CD4-positive, alpha-beta memory T cell (primary cell): ENCODE measurements at regions of chr5 and their contacts with region 1.

Region 1: DNA sequence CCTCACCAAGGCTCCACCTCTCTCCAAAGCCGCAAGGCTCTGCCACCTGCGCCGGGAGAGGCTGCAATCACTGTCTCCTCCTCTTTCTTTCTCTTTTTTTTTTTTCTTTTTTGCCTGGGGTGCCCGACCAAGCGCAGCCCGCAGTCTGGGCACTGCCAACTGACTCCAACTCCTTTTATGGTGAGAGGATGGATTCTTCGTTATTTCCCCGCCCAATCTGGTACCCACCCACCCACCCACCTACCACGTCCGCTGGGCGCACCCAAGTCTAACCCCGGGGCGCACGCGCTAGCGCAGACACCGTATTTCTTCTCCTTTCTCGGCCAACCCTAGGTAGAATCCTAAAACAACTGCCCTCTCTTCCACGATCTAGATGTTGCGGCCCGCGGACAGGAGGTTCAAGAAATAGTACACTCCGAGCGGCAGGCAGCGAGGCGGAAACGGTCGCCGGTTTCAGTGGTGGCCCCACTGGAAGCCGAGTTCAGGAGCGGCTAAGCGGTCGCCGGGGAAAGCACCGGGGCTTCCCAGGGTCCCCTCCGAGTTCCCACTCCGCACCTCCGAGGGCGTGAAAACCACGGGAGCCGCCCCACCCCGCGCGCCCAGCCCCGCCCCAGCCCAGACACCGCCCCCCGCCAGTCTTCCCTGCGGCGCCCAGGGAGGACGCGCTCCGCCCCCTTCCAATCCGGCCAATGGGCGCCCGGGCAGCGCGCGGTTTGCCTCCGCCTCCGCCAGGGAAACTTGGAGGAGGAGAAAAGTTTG is 381 bp upstream of the PTGER4 start:
- DNase-seq: peak; percentile 90 to 92 (median 90)
- H3K4me3 ChIP-seq: peak overlapping the region; percentile 74 to 92
- H3K4me3 Mint-ChIP-seq: peak overlapping the region; percentile 92 to 100 (median 99)
- H3K27ac ChIP-seq: peak overlapping the region; percentile 86
- H3K27ac Mint-ChIP-seq: peak overlapping the region; percentile 87 to 99 (median 98)
- H3K4me1 ChIP-seq: peaks cover 46% of the 10 kb centered on the region
- H3K4me1 Mint-ChIP-seq: peaks cover 34 to 70% (median 46%) of the 10 kb centered on the region in 4 donors
- H3K27me3 ChIP-seq: no peaks in the 10 kb centered on the region
- H3K27me3 Mint-ChIP-seq: no peaks in the 10 kb centered on the region

Region 2: GRCh38 chr5:39274398-39275085 is 1404.8 kb before region 1 on chr5:
- CTCF ChIA-PET with region 1: no interaction called
- POLR2A ChIA-PET with region 1: no interaction called
- intact Hi-C with region 1: loop called (anchors 5 kb)
- DNase-seq: peak; percentile 36 to 53 (median 41)
- H3K4me3 ChIP-seq: peak overlapping the region; percentile 20 to 25
- H3K4me3 Mint-ChIP-seq: peak overlapping the region; percentile 72 to 89 (median 85)
- H3K27ac ChIP-seq: peak overlapping the region; percentile 73
- H3K27ac Mint-ChIP-seq: peak overlapping the region; percentile 90 to 98 (median 96)
- H3K4me1 ChIP-seq: peaks cover 54% of the 10 kb centered on the region
- H3K4me1 Mint-ChIP-seq: peaks cover 37 to 71% (median 51%) of the 10 kb centered on the region in 4 donors
- H3K27me3 ChIP-seq: no peaks in the 10 kb centered on the region
- H3K27me3 Mint-ChIP-seq: no peaks in the 10 kb centered on the region

Region 3: DNA sequence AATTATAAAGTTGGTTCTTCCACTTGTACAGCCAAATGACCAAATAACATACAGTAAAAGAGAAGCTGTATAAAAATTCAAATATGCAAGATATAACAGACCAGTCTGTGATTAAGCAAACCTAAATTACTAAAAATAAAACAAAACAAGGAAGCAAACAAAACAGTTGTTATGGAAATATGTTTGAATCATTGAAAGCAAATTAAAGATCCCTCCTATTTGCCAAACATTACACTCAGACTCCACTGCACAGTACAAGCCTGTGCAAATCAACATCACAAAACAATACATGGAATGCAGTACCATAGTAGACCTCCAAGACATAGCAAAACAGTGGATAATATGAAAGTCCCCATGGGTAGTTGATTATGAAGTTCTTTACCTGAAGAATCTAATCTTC is 287.7 kb before region 1 on chr5:
- CTCF ChIA-PET with region 1: interaction called, 6 read pairs
- POLR2A ChIA-PET with region 1: interaction called, 15 read pairs
- intact Hi-C with region 1: no loop called
- DNase-seq: no peak
- H3K4me3 ChIP-seq: no peak overlapping the region
- H3K4me3 Mint-ChIP-seq: peak overlapping the region in 1 of 8 donors; percentile 6
- H3K27ac ChIP-seq: no peak overlapping the region
- H3K27ac Mint-ChIP-seq: peak overlapping the region in 5 of 7 donors; percentile 17 to 79 (median 63)
- H3K4me1 ChIP-seq: peaks cover 52% of the 10 kb centered on the region
- H3K4me1 Mint-ChIP-seq: peaks cover 42 to 58% (median 46%) of the 10 kb centered on the region in 4 donors
- H3K27me3 ChIP-seq: no peaks in the 10 kb centered on the region
- H3K27me3 Mint-ChIP-seq: no peaks in the 10 kb centered on the region

Region 4: DNA sequence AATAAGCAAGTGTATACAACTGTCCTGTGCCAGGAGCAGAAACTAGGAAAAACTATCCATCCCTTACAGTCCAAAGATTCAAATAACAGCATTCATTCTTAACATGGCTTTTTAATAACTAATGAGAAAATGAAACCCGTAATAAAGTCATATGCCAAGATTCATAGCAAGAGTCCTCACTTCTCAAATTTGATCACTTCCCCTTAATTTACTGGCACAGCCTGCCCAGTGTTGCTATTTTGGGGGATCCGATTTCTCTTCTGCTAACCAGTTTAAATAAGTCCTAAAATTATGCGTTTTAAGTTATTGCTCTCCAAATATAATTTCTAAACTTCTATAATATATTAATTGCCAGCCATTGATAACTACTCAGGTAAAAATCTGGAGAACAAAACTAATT is 176.6 kb before region 1 on chr5:
- CTCF ChIA-PET with region 1: interaction called, 3 read pairs
- POLR2A ChIA-PET with region 1: interaction called, 3 read pairs
- intact Hi-C with region 1: loop called (anchors 1 kb)
- DNase-seq: no peak
- H3K4me3 ChIP-seq: no peak overlapping the region
- H3K4me3 Mint-ChIP-seq: no peak overlapping the region
- H3K27ac ChIP-seq: no peak overlapping the region
- H3K27ac Mint-ChIP-seq: no peak overlapping the region
- H3K4me1 ChIP-seq: peaks cover 6% of the 10 kb centered on the region
- H3K4me1 Mint-ChIP-seq: peaks cover 4 to 12% (median 6%) of the 10 kb centered on the region in 4 donors
- H3K27me3 ChIP-seq: no peaks in the 10 kb centered on the region
- H3K27me3 Mint-ChIP-seq: no peaks in the 10 kb centered on the region

Region 5: GRCh38 chr5:40605295-40605958 is 73.9 kb before region 1 on chr5:
- CTCF ChIA-PET with region 1: no interaction called
- POLR2A ChIA-PET with region 1: interaction called, 15 read pairs
- intact Hi-C with region 1: loop called (anchors 5 kb)
- DNase-seq: peak; percentile 39 to 52 (median 52)
- H3K4me3 ChIP-seq: peak overlapping the region in 1 of 2 donors; percentile 38
- H3K4me3 Mint-ChIP-seq: peak overlapping the region; percentile 77 to 93 (median 84)
- H3K27ac ChIP-seq: no peak overlapping the region
- H3K27ac Mint-ChIP-seq: peak overlapping the region in 6 of 7 donors; percentile 2 to 89 (median 79)
- H3K4me1 ChIP-seq: peaks cover 53% of the 10 kb centered on the region
- H3K4me1 Mint-ChIP-seq: peaks cover 33 to 59% (median 45%) of the 10 kb centered on the region in 4 donors
- H3K27me3 ChIP-seq: no peaks in the 10 kb centered on the region
- H3K27me3 Mint-ChIP-seq: no peaks in the 10 kb centered on the region

Region 6: GRCh38 chr5:40652441-40653220 is 26.7 kb before region 1 on chr5:
- CTCF ChIA-PET with region 1: interaction called, 58 read pairs
- POLR2A ChIA-PET with region 1: interaction called, 158 read pairs
- intact Hi-C with region 1: loop called (anchors 1 kb)
- DNase-seq: peak in 2 of 5 donors; percentile 19 to 30
- H3K4me3 ChIP-seq: no peak overlapping the region
- H3K4me3 Mint-ChIP-seq: peak overlapping the region; percentile 63 to 90 (median 84)
- H3K27ac ChIP-seq: peak overlapping the region; percentile 55
- H3K27ac Mint-ChIP-seq: peak overlapping the region; percentile 84 to 97 (median 93)
- H3K4me1 ChIP-seq: peaks cover 82% of the 10 kb centered on the region
- H3K4me1 Mint-ChIP-seq: peaks cover 53 to 89% (median 73%) of the 10 kb centered on the region in 4 donors
- H3K27me3 ChIP-seq: no peaks in the 10 kb centered on the region
- H3K27me3 Mint-ChIP-seq: no peaks in the 10 kb centered on the region

Region 7: GRCh38 chr5:40762705-40763104 is 83.4 kb after region 1 on chr5:
- CTCF ChIA-PET with region 1: no interaction called
- POLR2A ChIA-PET with region 1: no interaction called
- intact Hi-C with region 1: no loop called
- DNase-seq: no peak
- H3K4me3 ChIP-seq: no peak overlapping the region
- H3K4me3 Mint-ChIP-seq: no peak overlapping the region
- H3K27ac ChIP-seq: no peak overlapping the region
- H3K27ac Mint-ChIP-seq: no peak overlapping the region
- H3K4me1 ChIP-seq: no peaks in the 10 kb centered on the region
- H3K4me1 Mint-ChIP-seq: no peaks in the 10 kb centered on the region
- H3K27me3 ChIP-seq: no peaks in the 10 kb centered on the region
- H3K27me3 Mint-ChIP-seq: no peaks in the 10 kb centered on the region

Region 8: GRCh38 chr5:40834849-40835787 is 155.8 kb after region 1 on chr5 and contains the start of gene RPL37:
- CTCF ChIA-PET with region 1: no interaction called
- POLR2A ChIA-PET with region 1: interaction called, 3 read pairs
- intact Hi-C with region 1: loop called (anchors 1 kb)
- DNase-seq: peak; percentile 88 to 91 (median 90)
- H3K4me3 ChIP-seq: peak within 1 kb of the TSS; percentile 71 to 99
- H3K4me3 Mint-ChIP-seq: peak within 1 kb of the TSS; percentile 97 to 100 (median 98)
- H3K27ac ChIP-seq: peak within 1 kb of the TSS; percentile 92
- H3K27ac Mint-ChIP-seq: peak within 1 kb of the TSS; percentile 94 to 100 (median 99)
- H3K4me1 ChIP-seq: peaks cover 41% of the 10 kb centered on the region
- H3K4me1 Mint-ChIP-seq: peaks cover 20 to 68% (median 47%) of the 10 kb centered on the region in 4 donors
- H3K27me3 ChIP-seq: no peaks in the 10 kb centered on the region
- H3K27me3 Mint-ChIP-seq: no peaks in the 10 kb centered on the region
- total RNA-seq, gene RPL37: 2,354 to 2,406 TPM